OCI-LY7 (cell line): ENCODE measurements at regions of chr6 and their contacts with region 1.

Region 1: GRCh38 chr6:31559958-31560696 is 12.0 kb upstream of the LTA start:
- DNase-seq: peak; percentile 90
- H3K4me3 ChIP-seq: peak overlapping the region; percentile 57
- H3K27ac ChIP-seq: peak overlapping the region; percentile 94
- H3K4me1 ChIP-seq: peaks cover 70% of the 10 kb centered on the region
- CTCF ChIP-seq: no peak

Region 2: DNA sequence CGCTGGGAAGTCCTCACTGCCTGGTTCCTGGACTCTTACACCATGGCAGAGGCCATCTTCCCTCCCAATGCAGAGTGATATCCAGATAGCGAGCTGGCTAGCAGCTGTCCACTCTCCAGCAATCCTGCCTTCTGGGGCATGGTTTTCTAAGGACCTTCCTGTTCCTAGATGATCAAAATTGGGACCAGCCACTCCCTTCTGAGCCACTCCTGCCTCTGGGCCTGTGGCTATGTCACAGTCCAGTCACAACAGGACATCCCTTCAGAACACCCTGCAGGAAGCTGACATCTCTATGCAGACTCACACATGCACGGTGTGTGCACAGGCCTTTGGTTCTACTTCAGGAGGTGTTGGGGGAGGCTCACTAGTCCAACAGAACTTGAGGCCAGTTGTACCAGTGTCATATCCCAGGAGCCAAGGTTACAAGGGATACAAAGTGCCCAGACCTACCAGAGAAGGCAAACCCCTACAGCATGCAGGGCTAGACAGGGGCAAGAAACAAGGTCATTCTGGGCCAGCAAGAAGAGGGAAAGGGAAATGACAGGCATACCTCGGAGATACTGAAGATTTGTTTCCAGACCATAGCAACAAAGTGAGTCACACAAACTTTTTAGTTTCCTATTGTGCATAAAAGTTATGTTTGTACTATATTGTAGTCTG is 34.1 kb before region 1 on chr6:
- CTCF ChIA-PET with region 1: no interaction called
- POLR2A ChIA-PET with region 1: no interaction called
- intact Hi-C with region 1: no loop called
- DNase-seq: no peak
- H3K4me3 ChIP-seq: no peak overlapping the region
- H3K27ac ChIP-seq: no peak overlapping the region
- H3K4me1 ChIP-seq: no peaks in the 10 kb centered on the region
- CTCF ChIP-seq: no peak

Region 3: DNA sequence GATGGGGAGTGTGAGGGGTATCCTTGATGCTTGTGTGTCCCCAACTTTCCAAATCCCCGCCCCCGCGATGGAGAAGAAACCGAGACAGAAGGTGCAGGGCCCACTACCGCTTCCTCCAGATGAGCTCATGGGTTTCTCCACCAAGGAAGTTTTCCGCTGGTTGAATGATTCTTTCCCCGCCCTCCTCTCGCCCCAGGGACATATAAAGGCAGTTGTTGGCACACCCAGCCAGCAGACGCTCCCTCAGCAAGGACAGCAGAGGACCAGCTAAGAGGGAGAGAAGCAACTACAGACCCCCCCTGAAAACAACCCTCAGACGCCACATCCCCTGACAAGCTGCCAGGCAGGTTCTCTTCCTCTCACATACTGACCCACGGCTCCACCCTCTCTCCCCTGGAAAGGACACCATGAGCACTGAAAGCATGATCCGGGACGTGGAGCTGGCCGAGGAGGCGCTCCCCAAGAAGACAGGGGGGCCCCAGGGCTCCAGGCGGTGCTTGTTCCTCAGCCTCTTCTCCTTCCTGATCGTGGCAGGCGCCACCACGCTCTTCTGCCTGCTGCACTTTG is 15.3 kb after region 1 on chr6 and contains the start of gene TNF:
- CTCF ChIA-PET with region 1: interaction called, 4 read pairs
- POLR2A ChIA-PET with region 1: interaction called, 8 read pairs
- intact Hi-C with region 1: loop called (anchors 1 kb)
- DNase-seq: peak; percentile 61
- H3K4me3 ChIP-seq: peak within 1 kb of the TSS; percentile 69
- H3K27ac ChIP-seq: peak within 1 kb of the TSS; percentile 42
- H3K4me1 ChIP-seq: peaks cover 88% of the 10 kb centered on the region
- CTCF ChIP-seq: no peak
- total RNA-seq, gene TNF: 1.7 and 3.5 TPM in 2 replicates

Region 4: DNA sequence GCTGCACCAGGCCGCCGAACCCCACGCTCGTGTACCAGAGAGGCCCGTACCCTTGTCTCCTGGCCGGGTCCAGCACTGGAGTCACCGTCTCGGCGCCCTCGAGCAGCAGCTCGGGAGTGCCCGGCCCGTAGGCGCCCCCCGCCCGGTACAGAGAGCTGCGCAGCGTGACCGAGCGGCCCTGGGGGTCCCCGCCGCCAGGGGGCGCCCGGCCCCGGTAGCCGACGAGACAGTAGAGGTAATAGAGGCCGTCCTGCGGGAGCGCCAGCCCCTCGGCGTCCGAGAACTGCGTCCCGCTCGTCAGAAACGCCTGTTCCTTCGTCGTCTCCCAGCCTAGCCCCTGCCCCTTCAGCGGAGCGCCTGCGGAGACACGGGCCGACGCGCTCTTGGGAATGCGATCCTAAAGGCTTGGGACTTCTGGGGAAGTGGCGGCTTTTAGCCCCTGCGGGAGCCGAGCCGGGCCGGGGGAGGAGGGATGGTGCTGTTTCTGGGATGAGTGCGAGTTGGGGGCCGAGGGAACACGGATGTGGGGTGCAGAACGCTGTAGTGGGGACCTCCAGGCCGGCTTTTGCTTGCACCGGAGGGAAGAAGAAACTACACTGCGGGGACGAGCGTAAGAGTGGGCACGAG is 20.8 kb after region 1 on chr6:
- CTCF ChIA-PET with region 1: interaction called, 3 read pairs
- POLR2A ChIA-PET with region 1: interaction called, 3 read pairs
- intact Hi-C with region 1: loop called (anchors 1 kb)
- DNase-seq: peak; percentile 89
- H3K4me3 ChIP-seq: peak overlapping the region; percentile 87
- H3K27ac ChIP-seq: peak overlapping the region; percentile 86
- H3K4me1 ChIP-seq: peaks cover 78% of the 10 kb centered on the region
- CTCF ChIP-seq: peak; percentile 93

Region 5: GRCh38 chr6:32058511-32058963 is 498.4 kb after region 1 on chr6:
- CTCF ChIA-PET with region 1: no interaction called
- POLR2A ChIA-PET with region 1: no interaction called
- intact Hi-C with region 1: no loop called
- DNase-seq: no peak
- H3K4me3 ChIP-seq: no peak overlapping the region
- H3K27ac ChIP-seq: no peak overlapping the region
- H3K4me1 ChIP-seq: no peaks in the 10 kb centered on the region
- CTCF ChIP-seq: no peak